Activated naive CD4-positive, alpha-beta T cell treated with anti-CD3 and anti-CD28 coated beads for 36 hours (primary cell): ENCODE measurements at regions of chr13 and their contacts with region 1.

Region 1: DNA sequence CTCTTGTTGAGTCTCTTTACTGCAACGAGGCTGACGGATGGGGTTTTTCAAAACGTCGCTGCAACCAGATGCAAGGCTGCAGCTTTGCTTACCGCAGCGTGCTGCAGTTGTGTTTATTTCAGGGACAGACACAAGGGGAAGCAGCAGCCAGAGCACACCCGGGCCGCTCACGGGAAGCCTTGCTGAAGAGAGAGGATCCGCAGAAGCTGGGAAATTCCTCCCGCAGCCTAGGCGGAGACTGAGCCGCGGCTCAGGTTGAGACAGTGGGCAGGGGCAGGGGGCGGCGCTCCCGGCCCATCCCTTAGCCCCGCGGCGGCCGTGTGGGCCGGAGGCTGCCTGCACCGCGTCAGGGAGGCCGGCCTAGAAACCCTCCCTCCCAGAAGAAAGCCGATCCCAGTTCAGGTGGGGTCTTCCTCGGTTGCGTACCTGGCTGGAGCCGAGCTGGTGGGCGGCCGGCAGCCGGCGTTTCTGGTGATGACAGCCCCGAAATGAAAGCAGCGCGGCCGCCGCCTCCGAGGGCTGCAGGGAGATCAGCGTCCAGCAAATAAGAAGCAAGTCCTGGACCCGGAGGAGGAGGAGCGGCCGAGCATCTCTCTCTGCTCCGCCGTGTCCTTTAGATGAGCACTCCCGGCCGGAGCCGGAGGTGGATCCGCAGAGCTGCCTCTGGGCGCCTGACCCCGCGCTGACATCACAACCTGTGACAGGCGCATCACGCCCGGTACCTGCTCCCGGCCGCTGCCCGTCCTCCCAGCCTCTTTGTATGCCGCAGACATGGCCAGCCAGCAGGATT is at the start of gene FRY:
- DNase-seq: peak; percentile 72
- H3K4me3 Mint-ChIP-seq: peak within 1 kb of the TSS; percentile 85
- H3K27ac Mint-ChIP-seq: peak within 1 kb of the TSS; percentile 68
- H3K4me1 Mint-ChIP-seq: peaks cover 45% of the 10 kb centered on the region
- H3K27me3 Mint-ChIP-seq: peaks cover 9% of the 10 kb centered on the region
- total RNA-seq, gene FRY: 7.3 to 7.8 TPM

Region 2: GRCh38 chr13:31199849-31200636 is 831.2 kb before region 1 on chr13 and contains the start of gene B3GLCT:
- CTCF ChIA-PET with region 1: no interaction called
- intact Hi-C with region 1: loop called (anchors 10 kb)
- DNase-seq: peak; percentile 65
- H3K4me3 Mint-ChIP-seq: peak within 1 kb of the TSS; percentile 83
- H3K27ac Mint-ChIP-seq: peak within 1 kb of the TSS; percentile 68
- H3K4me1 Mint-ChIP-seq: peaks cover 26% of the 10 kb centered on the region
- H3K27me3 Mint-ChIP-seq: no peaks in the 10 kb centered on the region
- total RNA-seq, gene B3GLCT: 1.2 to 1.5 TPM

Region 3: DNA sequence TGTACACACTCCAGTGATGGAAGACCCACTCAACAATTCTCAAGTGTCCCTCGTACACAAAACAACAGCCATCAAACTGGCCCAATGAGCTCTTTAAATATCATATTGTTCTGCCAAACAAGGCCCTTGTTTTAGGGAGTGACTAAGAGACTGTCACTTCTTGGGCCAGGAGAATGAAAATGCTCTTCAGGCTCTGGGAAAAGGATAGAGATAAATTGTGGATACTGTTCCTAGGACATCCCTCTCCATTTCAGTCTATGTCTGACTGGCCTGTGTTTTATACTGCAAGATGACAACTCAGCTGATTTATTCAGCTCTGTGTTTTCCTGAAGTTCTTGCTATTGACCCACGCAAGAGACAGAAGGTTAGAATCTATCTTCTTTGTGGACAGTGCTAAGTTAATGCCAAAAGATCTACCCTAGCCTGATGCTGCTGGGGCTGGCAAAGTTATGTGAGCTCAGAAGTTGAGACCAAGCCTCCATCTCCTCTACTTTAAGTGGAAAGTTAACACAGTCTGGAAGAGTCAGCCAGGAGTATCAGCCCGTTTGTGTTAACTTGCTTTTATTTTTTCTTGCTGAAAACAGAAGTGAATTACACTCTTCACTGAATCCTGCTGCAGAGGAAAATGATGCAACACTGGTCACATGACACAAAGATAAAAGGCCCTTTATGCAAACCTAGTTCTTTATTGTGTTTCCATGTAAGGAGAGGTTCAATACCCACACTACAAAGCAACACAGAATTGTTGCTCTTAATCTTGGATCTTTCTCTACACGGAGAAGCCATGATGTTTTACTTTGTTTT is 15.0 kb after region 1 on chr13:
- CTCF ChIA-PET with region 1: interaction called, 12 read pairs
- intact Hi-C with region 1: loop called (anchors 1 kb)
- DNase-seq: peak; percentile 61
- H3K4me3 Mint-ChIP-seq: peak overlapping the region; percentile 55
- H3K27ac Mint-ChIP-seq: peak overlapping the region; percentile 93
- H3K4me1 Mint-ChIP-seq: peaks cover 69% of the 10 kb centered on the region
- H3K27me3 Mint-ChIP-seq: no peaks in the 10 kb centered on the region

Region 4: GRCh38 chr13:32060401-32060878 is 29.2 kb after region 1 on chr13:
- CTCF ChIA-PET with region 1: no interaction called
- intact Hi-C with region 1: no loop called
- DNase-seq: no peak
- H3K4me3 Mint-ChIP-seq: no peak overlapping the region
- H3K27ac Mint-ChIP-seq: no peak overlapping the region
- H3K4me1 Mint-ChIP-seq: peaks cover 6% of the 10 kb centered on the region
- H3K27me3 Mint-ChIP-seq: no peaks in the 10 kb centered on the region

Region 5: DNA sequence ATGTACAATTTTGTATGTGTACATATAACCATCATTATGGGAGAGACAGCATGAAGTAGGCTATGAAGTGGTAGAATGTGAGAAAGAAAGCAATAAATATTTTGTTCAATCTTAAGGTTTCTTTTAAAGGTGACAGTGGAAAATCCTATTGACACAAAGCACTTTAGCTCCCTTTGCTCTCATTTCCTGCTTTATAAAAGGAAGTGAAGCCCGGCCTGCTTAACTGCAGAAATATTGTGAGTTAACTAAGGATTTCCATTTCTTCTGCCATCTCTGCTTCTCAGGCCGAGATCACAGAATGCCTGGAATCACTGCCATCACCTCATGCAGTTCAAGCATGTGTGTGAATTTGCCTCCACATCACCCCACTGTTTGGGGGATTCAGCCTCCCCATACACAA is 83.8 kb after region 1 on chr13:
- CTCF ChIA-PET with region 1: no interaction called
- intact Hi-C with region 1: loop called (anchors 2 kb)
- DNase-seq: peak; percentile 7
- H3K4me3 Mint-ChIP-seq: no peak overlapping the region
- H3K27ac Mint-ChIP-seq: peak overlapping the region; percentile 39
- H3K4me1 Mint-ChIP-seq: peaks cover 20% of the 10 kb centered on the region
- H3K27me3 Mint-ChIP-seq: no peaks in the 10 kb centered on the region

Region 6: DNA sequence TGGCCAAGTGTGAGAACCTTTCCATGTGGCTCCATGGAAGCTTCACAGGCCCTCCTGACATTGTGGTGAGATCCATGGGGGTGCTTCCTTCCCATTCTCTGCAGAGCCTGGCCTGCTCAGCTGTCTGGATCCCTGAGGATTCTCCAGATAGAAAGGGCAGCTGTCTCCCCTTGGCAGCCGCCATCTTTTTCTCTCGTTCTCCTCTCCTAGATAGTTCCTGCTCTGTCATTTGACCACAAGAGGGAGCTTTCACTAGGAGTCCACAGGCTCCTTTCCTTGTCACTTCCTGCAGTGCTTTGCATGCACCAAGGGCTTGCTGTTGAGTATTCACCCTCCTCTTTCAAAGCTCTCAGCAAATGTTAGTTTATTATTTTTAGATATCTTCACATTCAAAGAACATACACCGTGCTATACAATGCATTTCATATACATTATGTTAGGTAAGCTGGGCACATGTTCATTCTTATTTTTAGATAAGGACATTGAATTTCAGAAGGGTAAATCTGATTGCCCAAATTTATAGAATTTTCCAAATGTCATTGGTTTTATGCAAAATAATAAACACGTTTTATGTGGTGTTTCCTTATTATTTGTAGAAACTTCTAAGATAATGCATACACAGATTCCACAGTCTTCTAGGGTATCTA is 133.5 kb after region 1 on chr13:
- CTCF ChIA-PET with region 1: interaction called, 10 read pairs
- intact Hi-C with region 1: loop called (anchors 5 kb)
- DNase-seq: peak; percentile 32
- H3K4me3 Mint-ChIP-seq: no peak overlapping the region
- H3K27ac Mint-ChIP-seq: no peak overlapping the region
- H3K4me1 Mint-ChIP-seq: no peaks in the 10 kb centered on the region
- H3K27me3 Mint-ChIP-seq: no peaks in the 10 kb centered on the region

Region 7: GRCh38 chr13:32195713-32196112 is 164.5 kb after region 1 on chr13:
- CTCF ChIA-PET with region 1: no interaction called
- intact Hi-C with region 1: no loop called
- DNase-seq: no peak
- H3K4me3 Mint-ChIP-seq: no peak overlapping the region
- H3K27ac Mint-ChIP-seq: no peak overlapping the region
- H3K4me1 Mint-ChIP-seq: no peaks in the 10 kb centered on the region
- H3K27me3 Mint-ChIP-seq: no peaks in the 10 kb centered on the region

Region 8: DNA sequence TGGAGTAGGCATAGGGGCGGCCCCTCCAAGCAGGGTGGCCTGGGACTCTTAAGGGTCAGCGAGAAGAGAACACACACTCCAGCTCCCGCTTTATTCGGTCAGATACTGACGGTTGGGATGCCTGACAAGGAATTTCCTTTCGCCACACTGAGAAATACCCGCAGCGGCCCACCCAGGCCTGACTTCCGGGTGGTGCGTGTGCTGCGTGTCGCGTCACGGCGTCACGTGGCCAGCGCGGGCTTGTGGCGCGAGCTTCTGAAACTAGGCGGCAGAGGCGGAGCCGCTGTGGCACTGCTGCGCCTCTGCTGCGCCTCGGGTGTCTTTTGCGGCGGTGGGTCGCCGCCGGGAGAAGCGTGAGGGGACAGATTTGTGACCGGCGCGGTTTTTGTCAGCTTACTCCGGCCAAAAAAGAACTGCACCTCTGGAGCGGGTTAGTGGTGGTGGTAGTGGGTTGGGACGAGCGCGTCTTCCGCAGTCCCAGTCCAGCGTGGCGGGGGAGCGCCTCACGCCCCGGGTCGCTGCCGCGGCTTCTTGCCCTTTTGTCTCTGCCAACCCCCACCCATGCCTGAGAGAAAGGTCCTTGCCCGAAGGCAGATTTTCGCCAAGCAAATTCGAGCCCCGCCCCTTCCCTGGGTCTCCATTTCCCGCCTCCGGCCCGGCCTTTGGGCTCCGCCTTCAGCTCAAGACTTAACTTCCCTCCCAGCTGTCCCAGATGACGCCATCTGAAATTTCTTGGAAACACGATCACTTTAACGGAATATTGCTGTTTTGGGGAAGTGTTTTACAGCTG is 284.2 kb after region 1 on chr13 and contains the starts of genes BRCA2 and ZAR1L:
- CTCF ChIA-PET with region 1: no interaction called
- intact Hi-C with region 1: loop called (anchors 1 kb)
- DNase-seq: peak; percentile 91
- H3K4me3 Mint-ChIP-seq: peak within 1 kb of the TSS; percentile 92
- H3K27ac Mint-ChIP-seq: peak within 1 kb of the TSS; percentile 98
- H3K4me1 Mint-ChIP-seq: peaks cover 12% of the 10 kb centered on the region
- H3K27me3 Mint-ChIP-seq: no peaks in the 10 kb centered on the region
- total RNA-seq, gene BRCA2: 17.3 to 21.3 TPM
- total RNA-seq, gene ZAR1L: not detected